Heart right ventricle (tissue), 16 donors: ENCODE measurements at regions of chr9 and their contacts with region 1.

Region 1: DNA sequence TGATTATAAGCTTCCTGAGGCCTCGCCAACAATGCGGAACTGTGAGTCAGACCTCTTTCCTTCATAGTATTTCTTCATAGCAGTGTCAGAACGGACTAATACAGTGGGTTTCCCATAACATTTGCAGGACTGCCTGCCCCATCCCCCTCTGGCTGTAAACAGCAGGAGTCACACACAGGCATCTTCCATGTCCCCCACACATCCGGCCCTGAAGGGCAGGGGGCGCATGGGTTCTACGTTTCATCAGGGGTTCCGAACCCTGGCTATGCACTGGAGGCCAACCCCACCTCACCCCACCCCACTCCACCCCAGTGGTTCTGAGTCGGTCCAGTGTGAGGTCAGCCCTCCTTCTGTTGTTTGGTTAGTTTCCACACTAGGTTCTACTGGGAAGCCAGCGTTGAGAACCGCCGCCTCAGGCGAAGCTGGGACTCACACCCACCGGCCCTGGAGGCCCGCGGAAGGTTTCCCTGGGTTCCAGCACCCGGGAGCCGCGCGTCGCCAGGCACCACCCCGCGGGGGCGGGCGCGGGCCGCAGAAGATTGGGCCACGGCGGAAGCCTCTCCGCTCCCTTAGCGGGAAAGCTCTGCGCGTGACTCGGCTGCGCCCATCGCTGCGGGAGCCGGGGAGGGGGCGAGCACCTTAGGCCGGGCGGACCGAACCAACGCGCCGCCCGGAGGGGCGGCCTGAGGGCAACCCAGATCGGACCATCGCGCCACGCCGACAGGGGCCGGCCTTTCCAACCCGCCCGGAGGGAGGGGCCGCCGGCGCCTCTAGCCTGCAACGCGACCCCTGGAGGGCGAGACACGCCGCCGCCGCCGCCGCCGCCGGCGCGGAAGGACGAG is at the start of gene RUSC2:
- DNase-seq: peak; percentile 84 to 85
- ATAC-seq: peak; percentile 84 to 94 (median 86)
- H3K4me3 ChIP-seq: peak within 1 kb of the TSS; percentile 73 to 93 (median 80)
- H3K27ac ChIP-seq: peak within 1 kb of the TSS; percentile 87 to 97 (median 96)
- H3K4me1 ChIP-seq: peaks cover 0 to 45% (median 32%) of the 10 kb centered on the region in 9 donors
- H3K27me3 ChIP-seq: no peaks in the 10 kb centered on the region
- CTCF ChIP-seq: peak; percentile 3 to 64 (median 45)
- total RNA-seq, gene RUSC2: 22.1 to 34.9 (median 28.2) TPM

Region 2: DNA sequence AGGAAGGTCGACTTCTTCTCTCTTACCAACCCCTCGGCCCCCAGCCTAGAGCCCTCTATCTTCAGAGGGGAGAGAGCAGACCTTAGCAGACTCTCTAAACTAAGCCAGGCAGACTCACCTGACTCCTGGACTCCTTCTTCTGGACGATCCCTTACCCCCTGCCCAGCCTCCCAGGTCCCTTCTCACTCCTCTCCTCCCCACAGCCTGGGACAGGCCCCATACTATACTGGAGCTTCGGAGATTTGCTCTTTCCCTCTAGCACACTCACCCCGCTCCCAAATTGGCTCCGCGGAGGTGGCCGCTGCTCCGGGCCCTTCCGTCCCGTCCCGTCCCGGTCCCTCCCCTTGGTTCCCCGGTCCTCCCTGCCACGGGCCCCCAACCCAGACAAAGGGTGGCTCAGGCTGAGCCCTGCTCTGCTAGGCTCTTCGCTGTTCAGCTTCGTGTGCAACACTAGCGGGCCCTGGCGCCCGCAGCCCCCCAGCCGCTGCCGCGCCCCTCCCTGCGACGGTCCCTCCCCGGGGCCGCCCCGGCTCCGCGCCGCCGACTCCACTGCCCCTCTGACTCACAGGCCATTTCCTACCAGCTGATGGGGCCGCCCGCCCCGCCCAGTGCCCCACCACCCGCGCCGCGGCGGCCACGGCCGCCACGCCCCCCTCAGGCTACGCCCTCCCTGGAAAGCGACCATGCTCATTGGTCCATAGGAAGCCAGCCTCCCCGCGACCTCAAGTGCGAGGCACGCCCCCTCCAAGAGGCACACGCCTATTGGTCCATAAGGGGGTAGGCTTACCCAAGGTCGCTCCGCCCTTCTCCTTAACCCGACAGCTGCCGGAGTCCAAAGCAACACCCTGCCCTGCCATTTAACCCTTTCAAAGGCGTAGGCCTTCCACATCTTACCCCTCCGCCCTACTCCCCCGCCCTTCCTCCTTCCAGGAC is 378.3 kb before region 1 on chr9:
- intact Hi-C with region 1: loop called in 2 of 10 experiments (anchors 5 to 10 kb)
- DNase-seq: peak; percentile 98
- ATAC-seq: peak; percentile 72 to 85 (median 82)
- H3K4me3 ChIP-seq: peak overlapping the region; percentile 49 to 89 (median 80)
- H3K27ac ChIP-seq: peak overlapping the region; percentile 56 to 98 (median 92)
- H3K4me1 ChIP-seq: peaks cover 17 to 61% (median 46%) of the 10 kb centered on the region in 9 donors
- H3K27me3 ChIP-seq: no peaks in the 10 kb centered on the region
- CTCF ChIP-seq: no peak

Region 3: GRCh38 chr9:35538361-35539234 is 49.1 kb after region 1 on chr9:
- intact Hi-C with region 1: loop called in 3 of 10 experiments (anchors 5 kb)
- DNase-seq: peak; percentile 76 to 78
- ATAC-seq: peak; percentile 83 to 92 (median 89)
- H3K4me3 ChIP-seq: peak overlapping the region; percentile 11 to 66 (median 50)
- H3K27ac ChIP-seq: peak overlapping the region; percentile 84 to 97 (median 89)
- H3K4me1 ChIP-seq: peaks cover 11 to 75% (median 53%) of the 10 kb centered on the region in 9 donors
- H3K27me3 ChIP-seq: no peaks in the 10 kb centered on the region
- CTCF ChIP-seq: no peak

Region 4: GRCh38 chr9:35563791-35564197 is 74.3 kb after region 1 on chr9:
- intact Hi-C with region 1: loop called in 2 of 10 experiments (anchors 5 kb)
- DNase-seq: peak; percentile 49 to 57
- ATAC-seq: peak; percentile 68 to 81 (median 72)
- H3K4me3 ChIP-seq: peak overlapping the region in 7 of 10 donors; percentile 7 to 39 (median 22)
- H3K27ac ChIP-seq: peak overlapping the region; percentile 13 to 70 (median 54)
- H3K4me1 ChIP-seq: peaks cover 13 to 43% (median 25%) of the 10 kb centered on the region in 9 donors
- H3K27me3 ChIP-seq: no peaks in the 10 kb centered on the region
- CTCF ChIP-seq: no peak